Activated B cell treated with CpG ODN at 0.5 μM for 24 hours (primary cell): ENCODE measurements at regions of chr20 and their contacts with region 1.

Region 1: GRCh38 chr20:46132705-46133120 is 14.6 kb downstream of the CD40 start:
- DNase-seq: peak; percentile 66
- ATAC-seq: peak; percentile 76
- H3K4me3 Mint-ChIP-seq: no peak overlapping the region
- H3K27ac Mint-ChIP-seq: peak overlapping the region; percentile 10
- H3K4me1 Mint-ChIP-seq: peaks cover 71% of the 10 kb centered on the region
- H3K27me3 Mint-ChIP-seq: peaks cover 9% of the 10 kb centered on the region
- CTCF ChIP-seq: peak; percentile 20

Region 2: GRCh38 chr20:46022411-46023147 is 110.1 kb before region 1 on chr20:
- CTCF ChIA-PET with region 1: interaction called, 9 read pairs
- POLR2A ChIA-PET with region 1: interaction called, 4 read pairs
- intact Hi-C with region 1: loop called (anchors 1 kb)
- DNase-seq: peak; percentile 73
- ATAC-seq: peak; percentile 62
- H3K4me3 Mint-ChIP-seq: peak overlapping the region; percentile 70
- H3K27ac Mint-ChIP-seq: no peak overlapping the region
- H3K4me1 Mint-ChIP-seq: peaks cover 24% of the 10 kb centered on the region
- H3K27me3 Mint-ChIP-seq: peaks cover 47% of the 10 kb centered on the region
- CTCF ChIP-seq: no peak

Region 3: DNA sequence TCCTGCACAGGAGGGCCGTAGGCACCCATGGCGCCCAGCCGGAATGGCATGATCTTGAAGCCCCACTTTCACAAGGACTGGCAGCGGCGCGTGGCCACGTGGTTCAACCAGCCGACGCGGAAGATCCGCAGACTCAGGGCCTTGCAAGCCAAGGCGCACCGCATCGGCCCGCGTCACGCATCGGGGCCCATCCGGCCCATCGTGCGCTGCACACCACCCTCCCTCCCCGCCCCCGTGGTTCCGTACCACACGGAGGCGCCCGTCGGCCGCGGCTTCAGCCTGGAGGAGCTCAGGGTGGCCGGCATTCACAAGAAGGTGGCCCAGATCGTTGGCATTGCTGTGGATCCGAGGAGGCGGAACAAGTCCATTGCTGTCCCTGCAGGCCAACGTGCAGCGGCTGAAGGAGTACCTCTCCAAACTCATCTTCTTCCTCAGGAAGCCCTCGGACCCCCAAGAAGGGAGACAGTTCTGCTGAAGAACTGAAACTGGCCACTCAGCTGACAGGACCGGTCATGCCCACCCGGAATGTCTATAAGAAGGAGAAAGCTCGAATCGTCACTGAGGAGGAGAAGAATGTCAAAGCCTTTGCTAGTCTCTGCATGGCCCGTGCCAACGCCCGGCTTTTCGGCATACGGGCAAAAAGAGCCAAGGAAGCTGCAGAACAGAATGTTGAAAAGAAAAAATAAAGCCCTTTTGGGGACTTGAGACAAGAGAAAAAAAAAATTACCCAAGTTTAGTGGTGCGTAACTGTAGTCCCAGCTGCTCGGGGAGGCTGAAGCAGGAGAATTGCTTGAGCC is 33.0 kb before region 1 on chr20:
- CTCF ChIA-PET with region 1: interaction called, 32 read pairs
- POLR2A ChIA-PET with region 1: interaction called, 44 read pairs
- intact Hi-C with region 1: loop called (anchors 1 kb)
- DNase-seq: peak; percentile 62
- ATAC-seq: peak; percentile 100
- H3K4me3 Mint-ChIP-seq: peak overlapping the region; percentile 74
- H3K27ac Mint-ChIP-seq: peak overlapping the region; percentile 50
- H3K4me1 Mint-ChIP-seq: peaks cover 16% of the 10 kb centered on the region
- H3K27me3 Mint-ChIP-seq: peaks cover 1% of the 10 kb centered on the region
- CTCF ChIP-seq: no peak

Region 4: DNA sequence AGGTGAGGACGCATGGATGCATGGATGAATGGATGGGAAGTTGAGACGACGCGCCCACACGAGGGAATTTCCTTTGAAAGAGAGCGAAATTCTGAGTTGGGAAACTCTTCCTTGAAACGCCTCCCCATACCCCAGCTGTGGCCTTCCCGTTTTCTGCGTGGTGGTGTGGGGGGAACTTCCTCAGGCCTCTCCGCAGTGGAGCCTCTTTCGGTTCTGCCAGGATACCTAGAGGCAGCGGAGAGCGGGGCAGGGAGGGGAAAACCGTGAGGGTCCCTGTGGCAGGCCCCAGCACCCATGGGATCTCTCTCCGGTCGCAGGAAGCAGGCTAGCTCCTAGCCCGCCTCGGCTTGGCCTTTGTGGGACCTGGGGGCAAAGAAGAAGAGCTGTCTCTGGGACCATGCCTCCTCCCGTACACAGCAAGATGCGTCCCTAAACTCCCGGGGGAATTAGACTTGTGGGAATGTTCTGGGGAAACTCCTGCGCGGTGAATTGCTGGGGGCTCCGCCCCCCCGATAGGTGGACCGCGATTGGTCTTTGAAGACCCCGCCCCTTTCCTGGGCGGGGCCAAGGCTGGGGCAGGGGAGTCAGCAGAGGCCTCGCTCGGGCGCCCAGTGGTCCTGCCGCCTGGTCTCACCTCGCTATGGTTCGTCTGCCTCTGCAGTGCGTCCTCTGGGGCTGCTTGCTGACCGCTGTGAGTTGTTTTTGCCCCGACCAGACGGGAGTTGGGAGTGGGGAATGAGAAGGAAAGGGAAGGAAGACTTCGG is 14.8 kb before region 1 on chr20 and contains the start of gene CD40:
- CTCF ChIA-PET with region 1: interaction called, 8 read pairs
- POLR2A ChIA-PET with region 1: interaction called, 130 read pairs
- intact Hi-C with region 1: loop called (anchors 1 kb)
- DNase-seq: peak; percentile 91
- ATAC-seq: peak; percentile 76
- H3K4me3 Mint-ChIP-seq: peak within 1 kb of the TSS; percentile 100
- H3K27ac Mint-ChIP-seq: peak within 1 kb of the TSS; percentile 100
- H3K4me1 Mint-ChIP-seq: peaks cover 60% of the 10 kb centered on the region
- H3K27me3 Mint-ChIP-seq: no peaks in the 10 kb centered on the region
- CTCF ChIP-seq: no peak
- total RNA-seq, gene CD40: 410 and 464 TPM in 2 replicates

Region 5: GRCh38 chr20:46174469-46175128 is 41.9 kb after region 1 on chr20:
- CTCF ChIA-PET with region 1: interaction called, 14 read pairs
- POLR2A ChIA-PET with region 1: no interaction called
- intact Hi-C with region 1: loop called (anchors 1 kb)
- DNase-seq: peak; percentile 69
- ATAC-seq: peak; percentile 97
- H3K4me3 Mint-ChIP-seq: no peak overlapping the region
- H3K27ac Mint-ChIP-seq: no peak overlapping the region
- H3K4me1 Mint-ChIP-seq: no peaks in the 10 kb centered on the region
- H3K27me3 Mint-ChIP-seq: peaks cover 49% of the 10 kb centered on the region
- CTCF ChIP-seq: no peak

Region 6: GRCh38 chr20:46349035-46349741 is 216.5 kb after region 1 on chr20:
- CTCF ChIA-PET with region 1: interaction called, 14 read pairs
- POLR2A ChIA-PET with region 1: interaction called, 18 read pairs
- intact Hi-C with region 1: loop called (anchors 1 kb)
- DNase-seq: peak; percentile 40
- ATAC-seq: no peak
- H3K4me3 Mint-ChIP-seq: no peak overlapping the region
- H3K27ac Mint-ChIP-seq: no peak overlapping the region
- H3K4me1 Mint-ChIP-seq: peaks cover 28% of the 10 kb centered on the region
- H3K27me3 Mint-ChIP-seq: no peaks in the 10 kb centered on the region
- CTCF ChIP-seq: no peak

Region 7: DNA sequence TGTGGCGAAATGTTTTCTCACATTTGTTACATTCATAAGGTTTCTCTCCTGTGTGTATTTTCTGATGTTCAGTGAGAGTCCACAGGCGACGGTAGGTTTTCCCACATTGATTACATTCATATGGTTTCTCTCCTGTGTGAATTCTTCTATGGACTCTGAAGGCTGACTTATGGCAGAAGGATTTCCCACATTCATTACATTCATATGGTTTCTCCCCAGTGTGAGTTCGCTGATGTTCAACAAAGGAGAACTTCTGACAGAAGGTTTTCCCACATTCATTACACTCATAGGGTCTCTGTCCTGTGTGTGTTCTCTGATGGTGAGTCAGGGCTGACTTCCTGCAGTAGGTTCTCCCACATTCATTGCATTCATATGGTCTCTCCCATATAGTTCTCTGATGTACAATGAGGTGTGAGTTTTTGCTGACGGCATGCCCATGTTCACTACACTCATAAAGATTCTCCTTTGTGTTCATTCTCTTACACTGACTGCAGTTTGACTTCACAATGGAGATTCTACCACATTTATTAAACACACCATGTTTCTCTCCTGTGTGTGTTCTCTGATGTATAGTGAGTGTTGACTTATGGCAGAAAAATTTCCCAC is 368.7 kb after region 1 on chr20:
- CTCF ChIA-PET with region 1: no interaction called
- POLR2A ChIA-PET with region 1: no interaction called
- intact Hi-C with region 1: no loop called
- DNase-seq: no peak
- ATAC-seq: no peak
- H3K4me3 Mint-ChIP-seq: no peak overlapping the region
- H3K27ac Mint-ChIP-seq: no peak overlapping the region
- H3K4me1 Mint-ChIP-seq: no peaks in the 10 kb centered on the region
- H3K27me3 Mint-ChIP-seq: peaks cover 31% of the 10 kb centered on the region
- CTCF ChIP-seq: no peak